ENCODE measurements at regions of chr9 and their contacts with region 1.

Region 1: GRCh38 chr9:16092142-16093091 is 539.6 kb downstream of the CCDC171 start:
- DNase-seq: no peak
- ATAC-seq: no peak
- H3K4me3 ChIP-seq: no peak overlapping the region
- H3K27ac ChIP-seq: no peak overlapping the region
- H3K4me1 ChIP-seq: no peaks in the 10 kb centered on the region
- H3K27me3 ChIP-seq: no peaks in the 10 kb centered on the region
- CTCF ChIP-seq: no peak
- EP300 ChIP-seq: no peak
- POLR2A ChIP-seq: no peak
- RAD21 ChIP-seq: no peak

Region 2: GRCh38 chr9:15837079-15837679 is 255.2 kb before region 1 on chr9:
- CTCF ChIA-PET with region 1: no interaction called
- POLR2A ChIA-PET with region 1: no interaction called
- RAD21 ChIA-PET with region 1: no interaction called
- SMC1A ChIA-PET with region 1: no interaction called
- in situ Hi-C with region 1: no loop called
- intact Hi-C with region 1: no loop called
- DNase-seq: peak; percentile 7
- ATAC-seq: peak; percentile 87
- H3K4me3 ChIP-seq: no peak overlapping the region
- H3K27ac ChIP-seq: no peak overlapping the region
- H3K4me1 ChIP-seq: no peaks in the 10 kb centered on the region
- H3K27me3 ChIP-seq: no peaks in the 10 kb centered on the region
- CTCF ChIP-seq: peak; percentile 67 to 74 (median 71)
- EP300 ChIP-seq: no peak
- POLR2A ChIP-seq: no peak
- RAD21 ChIP-seq: peak; percentile 58

Region 3: DNA sequence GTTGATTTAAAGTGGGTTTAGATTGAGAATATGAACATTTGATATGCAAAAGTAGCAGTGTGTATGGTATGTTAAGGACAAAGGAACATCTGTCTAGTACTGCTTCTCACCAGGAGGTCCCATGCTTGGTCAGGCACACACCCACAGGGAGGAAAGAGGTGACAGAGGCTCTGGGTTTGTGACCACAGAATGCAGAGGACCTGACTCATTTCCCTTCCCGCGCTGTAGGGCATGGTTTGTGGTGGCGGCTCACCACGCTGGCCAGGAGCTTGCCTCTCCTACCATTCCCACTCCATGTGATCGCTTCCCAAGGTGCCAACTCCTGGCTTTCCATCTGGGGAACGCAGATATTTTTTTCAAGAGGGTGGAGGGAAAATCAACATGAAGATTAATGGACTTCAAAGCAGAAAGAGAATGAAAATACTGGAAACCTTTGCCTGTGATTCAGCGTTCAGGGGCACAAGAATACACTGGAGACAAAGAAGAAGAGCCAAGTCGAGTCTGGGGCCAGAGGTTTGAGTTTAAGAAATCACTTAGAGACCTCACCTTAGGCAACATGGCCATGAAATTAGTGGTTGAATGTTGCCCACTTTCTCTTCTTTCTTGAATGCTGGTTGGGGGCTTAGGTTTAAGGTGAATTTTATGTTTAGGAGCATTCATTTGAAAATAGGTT is 61.8 kb before region 1 on chr9:
- CTCF ChIA-PET with region 1: no interaction called
- POLR2A ChIA-PET with region 1: no interaction called
- RAD21 ChIA-PET with region 1: no interaction called
- SMC1A ChIA-PET with region 1: no interaction called
- in situ Hi-C with region 1: no loop called
- intact Hi-C with region 1: loop called (anchors 10 kb)
- DNase-seq: peak; percentile 35
- ATAC-seq: peak; percentile 91
- H3K4me3 ChIP-seq: no peak overlapping the region
- H3K27ac ChIP-seq: no peak overlapping the region
- H3K4me1 ChIP-seq: no peaks in the 10 kb centered on the region
- H3K27me3 ChIP-seq: no peaks in the 10 kb centered on the region
- CTCF ChIP-seq: no peak
- EP300 ChIP-seq: no peak
- POLR2A ChIP-seq: no peak
- RAD21 ChIP-seq: no peak

Measured in GM12878 (cell line).